ENCODE measurements at regions of chr14 and their contacts with region 1.

Region 1: DNA sequence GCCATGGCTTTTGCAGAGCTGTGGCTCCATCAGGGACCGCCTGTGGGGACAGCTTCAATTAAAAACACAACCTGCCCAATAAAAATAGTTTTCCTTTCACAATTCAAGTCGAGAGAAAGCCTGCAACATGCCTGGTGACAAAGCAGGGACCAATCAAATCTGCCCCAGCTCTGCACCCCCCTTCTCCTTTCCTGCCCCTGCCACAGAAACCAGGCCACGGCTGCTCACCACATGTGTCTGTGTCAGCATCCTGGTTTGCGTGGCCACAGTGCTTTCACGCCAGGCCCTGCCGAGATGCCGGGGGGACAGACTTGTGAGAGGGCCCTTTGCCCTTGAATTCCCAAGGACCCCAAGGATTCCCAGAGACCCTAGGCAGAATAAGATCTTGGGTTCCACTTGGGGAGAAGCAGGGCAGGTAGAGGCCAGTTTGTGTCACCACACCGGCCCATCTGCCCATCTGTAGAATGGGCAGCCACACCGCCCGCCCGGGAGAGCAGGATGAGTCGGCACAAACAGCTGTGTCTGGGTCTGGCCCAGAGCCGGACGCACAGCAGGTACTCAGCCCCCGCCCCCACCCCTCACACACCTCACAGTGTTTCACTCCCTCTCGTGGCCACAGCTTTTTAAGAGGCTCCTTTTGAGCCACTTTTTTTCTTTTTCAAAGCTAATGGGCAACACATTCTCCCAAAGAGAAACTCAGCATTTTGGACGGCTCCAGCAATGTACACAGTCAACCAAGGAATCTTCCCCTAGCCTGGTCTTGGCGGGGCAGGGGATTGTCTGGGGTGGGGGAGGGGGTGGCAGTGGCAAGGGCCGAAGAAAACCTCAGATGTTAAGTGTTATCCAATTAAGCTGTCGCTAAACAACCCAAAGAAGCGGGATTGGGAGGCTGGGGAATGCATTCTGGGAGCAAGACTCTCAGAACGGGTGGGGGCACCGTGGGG is 41.5 kb downstream of the BCL11B start:
- DNase-seq: peak; percentile 86
- ATAC-seq: peak; percentile 53
- H3K4me3 Mint-ChIP-seq: peak overlapping the region; percentile 86
- H3K27ac Mint-ChIP-seq: peak overlapping the region; percentile 97
- H3K4me1 Mint-ChIP-seq: peaks cover 88% of the 10 kb centered on the region
- H3K27me3 Mint-ChIP-seq: no peaks in the 10 kb centered on the region

Region 2: GRCh38 chr14:99192028-99192621 is 38.4 kb before region 1 on chr14:
- POLR2A ChIA-PET with region 1: interaction called, 49 read pairs
- DNase-seq: no peak
- ATAC-seq: peak; percentile 16
- H3K4me3 Mint-ChIP-seq: peak overlapping the region; percentile 88
- H3K27ac Mint-ChIP-seq: peak overlapping the region; percentile 95
- H3K4me1 Mint-ChIP-seq: peaks cover 86% of the 10 kb centered on the region
- H3K27me3 Mint-ChIP-seq: no peaks in the 10 kb centered on the region

Region 3: DNA sequence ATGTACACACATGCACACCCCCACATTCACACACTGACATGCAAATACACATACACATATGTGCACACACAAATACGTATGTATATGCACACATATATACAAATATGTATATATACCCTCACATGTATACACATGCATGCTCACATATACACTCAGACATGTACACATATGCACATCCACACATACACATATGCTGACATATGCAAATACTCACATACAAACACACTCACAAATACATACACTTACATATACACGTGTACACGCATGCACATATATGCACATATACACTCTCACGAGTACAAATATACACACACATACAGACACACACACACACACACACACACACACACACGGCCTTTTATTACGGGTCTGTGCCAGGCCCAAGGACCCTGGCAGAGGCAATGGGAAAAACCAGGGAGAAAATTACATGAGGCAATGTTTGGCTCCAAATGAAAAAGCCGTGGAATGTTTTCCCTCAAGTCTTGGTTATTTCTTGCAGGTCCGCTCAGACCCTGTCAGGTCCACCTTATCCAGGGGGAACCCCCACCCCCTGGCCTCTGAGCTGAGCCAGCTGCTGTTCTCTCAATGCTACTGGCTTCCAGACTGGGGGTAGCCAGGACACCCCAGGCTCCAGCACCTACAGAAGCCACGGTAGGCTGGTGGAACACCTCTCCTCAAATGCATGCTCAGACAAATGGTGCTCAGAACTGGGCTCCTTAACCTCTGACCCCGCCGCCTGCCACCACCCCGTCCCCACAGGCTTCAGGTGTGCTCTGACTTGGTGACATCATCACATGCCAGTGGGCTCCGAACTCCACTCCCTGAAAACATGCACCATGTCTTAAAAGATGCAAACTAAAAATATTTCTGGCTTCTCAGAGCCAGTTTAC is 13.2 kb before region 1 on chr14:
- POLR2A ChIA-PET with region 1: interaction called, 21 read pairs
- DNase-seq: no peak
- ATAC-seq: no peak
- H3K4me3 Mint-ChIP-seq: peak overlapping the region; percentile 78
- H3K27ac Mint-ChIP-seq: peak overlapping the region; percentile 72
- H3K4me1 Mint-ChIP-seq: peaks cover 69% of the 10 kb centered on the region
- H3K27me3 Mint-ChIP-seq: no peaks in the 10 kb centered on the region

Region 4: DNA sequence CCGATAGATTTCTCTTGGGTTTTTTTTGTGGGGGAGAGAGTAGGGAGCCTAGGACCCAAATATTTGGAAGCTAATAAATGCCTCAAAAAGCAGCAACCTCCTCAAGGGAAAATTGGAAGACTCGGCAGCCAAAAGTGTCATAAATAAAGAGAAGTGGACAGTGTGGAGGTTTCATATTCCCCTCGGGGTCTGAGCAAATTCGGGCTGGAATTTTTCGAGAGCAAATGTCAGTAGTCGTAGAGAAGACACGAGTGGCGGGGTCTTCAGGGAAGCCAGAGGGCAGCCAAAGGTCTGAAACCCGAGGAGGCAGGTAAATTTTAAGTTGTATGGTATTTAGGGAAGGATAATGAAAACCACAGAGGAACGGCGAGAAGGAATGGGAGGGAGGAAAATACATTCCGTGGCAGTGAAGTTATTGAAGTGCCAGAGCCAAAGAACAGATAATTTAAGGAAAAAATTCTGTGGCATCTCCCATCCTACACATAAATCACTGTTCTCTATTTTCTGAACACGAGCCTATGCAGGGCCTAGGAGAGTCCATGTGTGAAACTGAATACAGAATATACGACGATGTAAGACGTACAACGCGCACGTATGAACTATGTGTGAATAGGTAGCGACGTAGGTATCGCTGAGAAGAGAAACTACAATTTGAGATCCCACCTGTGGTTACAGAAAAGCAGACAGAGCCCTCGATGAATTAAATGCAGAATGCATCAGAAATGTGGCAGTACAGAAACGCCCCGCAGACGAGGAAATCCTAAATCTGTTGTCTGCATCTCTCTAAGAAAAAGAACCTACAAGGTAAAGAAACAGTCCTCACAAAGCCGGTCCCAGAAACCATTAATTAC is 28.6 kb after region 1 on chr14:
- POLR2A ChIA-PET with region 1: interaction called, 796 read pairs
- DNase-seq: peak; percentile 24
- ATAC-seq: peak; percentile 21
- H3K4me3 Mint-ChIP-seq: peak overlapping the region; percentile 98
- H3K27ac Mint-ChIP-seq: peak overlapping the region; percentile 99
- H3K4me1 Mint-ChIP-seq: peaks cover 80% of the 10 kb centered on the region
- H3K27me3 Mint-ChIP-seq: no peaks in the 10 kb centered on the region